CD14-positive monocyte (primary cell): ENCODE measurements at regions of chr1 and their contacts with region 1.

Region 1: DNA sequence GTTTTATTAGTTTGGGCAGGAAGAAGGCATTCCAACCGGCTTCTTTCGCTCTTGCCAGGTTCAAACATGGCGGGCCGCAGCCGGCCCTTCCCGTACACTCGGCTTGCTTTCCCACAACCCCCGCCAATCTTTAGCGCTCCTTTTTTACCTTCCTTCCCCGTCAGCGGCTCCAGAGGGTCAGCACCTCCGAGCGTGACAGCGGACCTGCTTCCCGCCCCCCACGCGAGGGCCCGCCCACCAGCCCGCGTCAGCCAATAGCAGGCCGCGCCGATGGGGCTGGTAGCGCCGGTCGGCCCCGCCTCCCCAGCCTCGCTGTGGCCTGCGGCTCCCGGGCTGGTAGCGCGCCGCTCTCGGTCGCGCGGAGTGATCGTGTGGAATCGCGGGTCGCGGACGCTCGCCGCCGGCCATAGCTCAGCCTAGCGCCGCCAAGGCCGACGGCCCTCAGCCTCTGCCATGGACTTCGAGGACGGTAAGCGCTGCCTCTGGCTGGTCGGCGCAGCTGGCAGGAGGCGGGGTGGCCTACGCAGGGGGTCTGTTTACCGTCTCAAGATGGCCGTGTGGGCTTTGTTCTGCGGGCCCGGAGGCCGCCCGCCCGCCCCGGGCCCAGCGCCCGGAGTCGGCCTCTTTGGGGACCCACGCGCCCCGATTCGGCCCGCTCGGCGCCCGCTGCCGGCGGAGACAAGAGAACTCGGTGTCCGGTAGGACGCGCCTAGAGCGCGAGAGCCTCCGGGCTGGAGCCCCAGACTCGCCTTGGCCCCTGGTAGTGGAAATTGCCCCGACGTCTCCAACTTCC is at the start of gene ZNF326:
- DNase-seq: peak; percentile 88 to 91 (median 91)
- H3K4me3 ChIP-seq: peak within 1 kb of the TSS; percentile 73 to 85 (median 78)
- H3K4me3 Mint-ChIP-seq: peak within 1 kb of the TSS; percentile 97 to 99
- H3K27ac ChIP-seq: peak within 1 kb of the TSS; percentile 90 to 94
- H3K27ac Mint-ChIP-seq: peak within 1 kb of the TSS; percentile 94 to 99 (median 97)
- H3K4me1 ChIP-seq: peaks cover 16 to 25% of the 10 kb centered on the region in 2 donors
- H3K4me1 Mint-ChIP-seq: peaks cover 28% of the 10 kb centered on the region
- H3K27me3 ChIP-seq: no peaks in the 10 kb centered on the region
- H3K27me3 Mint-ChIP-seq: peaks cover 0 to 4% (median 1%) of the 10 kb centered on the region in 3 donors
- CTCF ChIP-seq: no peak
- polyA plus RNA-seq, gene ZNF326: 3.8 to 5.0 (median 4.5) TPM

Region 2: DNA sequence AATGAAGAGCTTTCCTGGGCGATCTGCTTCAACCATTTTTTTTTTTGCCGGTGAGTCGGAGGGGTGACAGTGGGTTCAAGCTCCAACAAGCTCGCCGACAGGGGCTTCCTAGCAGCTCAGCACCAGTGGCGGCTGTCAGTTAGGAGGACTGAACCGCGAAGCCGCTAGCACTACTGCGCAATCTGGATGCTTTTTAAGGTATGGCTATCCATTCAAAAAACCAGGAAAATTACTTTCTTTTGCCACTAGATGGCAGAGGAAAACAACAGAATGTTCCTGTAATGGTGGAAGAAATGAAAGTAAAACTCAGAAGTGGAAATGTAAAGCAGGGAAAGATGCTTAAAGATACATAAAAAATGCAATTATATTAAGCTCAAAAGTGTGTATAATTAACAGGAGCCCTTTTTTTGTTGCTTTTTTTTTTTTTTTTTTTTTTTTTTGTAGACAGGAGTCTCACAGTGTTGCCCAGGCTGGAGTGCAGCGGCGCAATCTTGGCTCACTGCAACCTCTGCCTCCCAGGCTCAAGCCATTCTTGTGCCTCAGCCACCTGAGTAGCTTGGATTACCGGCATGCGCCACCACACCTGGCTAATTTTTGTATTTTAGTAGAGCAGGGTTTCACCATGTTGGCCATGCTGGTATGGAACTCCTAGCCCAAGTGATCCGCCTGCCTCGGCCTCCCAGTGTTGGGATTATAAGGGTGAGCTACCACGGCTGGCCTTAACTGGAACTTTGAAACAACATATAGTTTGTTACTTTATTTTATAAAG is 1011.0 kb before region 1 on chr1:
- intact Hi-C with region 1: loop called in 1 of 2 experiments (anchors 10 kb)
- DNase-seq: peak; percentile 52 to 75 (median 64)
- H3K4me3 ChIP-seq: peak overlapping the region in 1 of 3 experiments; percentile 34
- H3K4me3 Mint-ChIP-seq: peak overlapping the region; percentile 35 to 40
- H3K27ac ChIP-seq: peak overlapping the region; percentile 27 to 29
- H3K27ac Mint-ChIP-seq: peak overlapping the region in 6 of 7 donors; percentile 18 to 81 (median 70)
- H3K4me1 ChIP-seq: peaks cover 11 to 14% of the 10 kb centered on the region in 2 donors
- H3K4me1 Mint-ChIP-seq: peaks cover 24% of the 10 kb centered on the region
- H3K27me3 ChIP-seq: no peaks in the 10 kb centered on the region
- H3K27me3 Mint-ChIP-seq: no peaks in the 10 kb centered on the region
- CTCF ChIP-seq: peak; percentile 80

Region 3: GRCh38 chr1:90605070-90605469 is 610.1 kb after region 1 on chr1:
- intact Hi-C with region 1: no loop called
- DNase-seq: no peak
- H3K4me3 ChIP-seq: no peak overlapping the region
- H3K4me3 Mint-ChIP-seq: no peak overlapping the region
- H3K27ac ChIP-seq: no peak overlapping the region
- H3K27ac Mint-ChIP-seq: no peak overlapping the region
- H3K4me1 ChIP-seq: no peaks in the 10 kb centered on the region
- H3K4me1 Mint-ChIP-seq: no peaks in the 10 kb centered on the region
- H3K27me3 ChIP-seq: no peaks in the 10 kb centered on the region
- H3K27me3 Mint-ChIP-seq: no peaks in the 10 kb centered on the region
- CTCF ChIP-seq: no peak